CD8-positive, alpha-beta T cell (primary cell): ENCODE measurements at regions of chr12 and their contacts with region 1.

Region 1: GRCh38 chr12:66776974-66777373 is 98.1 kb upstream of the GRIP1 start:
- DNase-seq: peak; percentile 1 to 79 (median 40)
- ATAC-seq: peak; percentile 94
- H3K4me3 ChIP-seq: no peak overlapping the region
- H3K4me3 Mint-ChIP-seq: peak overlapping the region; percentile 75
- H3K27ac ChIP-seq: peak overlapping the region; percentile 17 to 56
- H3K27ac Mint-ChIP-seq: peak overlapping the region; percentile 96
- H3K4me1 ChIP-seq: peaks cover 36% of the 10 kb centered on the region
- H3K4me1 Mint-ChIP-seq: peaks cover 51% of the 10 kb centered on the region
- H3K27me3 ChIP-seq: no peaks in the 10 kb centered on the region
- H3K27me3 Mint-ChIP-seq: no peaks in the 10 kb centered on the region
- CTCF ChIP-seq: no peak

Region 2: DNA sequence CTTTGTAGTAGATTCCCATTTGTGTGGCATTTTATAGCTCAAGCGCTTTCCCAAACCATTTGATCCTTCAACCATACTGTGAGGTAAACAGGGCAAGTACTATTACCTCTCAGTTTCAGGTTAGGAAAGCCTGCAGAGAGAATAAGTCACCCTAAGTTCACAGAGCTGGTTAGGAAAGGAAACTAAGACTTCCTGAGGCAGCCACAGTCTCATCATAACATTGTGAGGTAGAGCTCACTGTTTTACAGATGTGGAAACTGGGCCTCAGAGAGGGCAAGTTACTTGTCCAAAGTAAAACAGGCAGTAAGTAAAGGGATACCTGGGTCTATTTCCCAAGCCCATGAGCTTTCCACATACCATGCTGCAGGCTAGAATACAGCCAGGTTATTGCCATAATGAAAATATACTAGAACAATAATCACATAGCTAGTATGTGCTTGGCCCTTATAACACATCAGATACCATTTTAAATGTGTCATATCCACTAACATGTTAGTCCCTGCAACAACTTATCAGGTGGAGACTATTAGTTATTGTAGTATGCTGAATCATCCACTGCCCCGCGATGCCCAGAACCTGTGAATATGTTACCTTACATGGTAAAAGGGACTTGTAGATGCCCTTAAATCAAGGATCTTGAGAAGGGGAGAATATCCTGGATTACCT is 52.8 kb after region 1 on chr12:
- CTCF ChIA-PET with region 1: no interaction called
- POLR2A ChIA-PET with region 1: no interaction called
- intact Hi-C with region 1: loop called in 1 of 2 experiments (anchors 5 kb)
- DNase-seq: peak in 3 of 9 experiments; percentile 19 to 54 (median 29)
- ATAC-seq: peak; percentile 61
- H3K4me3 ChIP-seq: no peak overlapping the region
- H3K4me3 Mint-ChIP-seq: peak overlapping the region; percentile 65
- H3K27ac ChIP-seq: peak overlapping the region in 1 of 2 experiments; percentile 64
- H3K27ac Mint-ChIP-seq: peak overlapping the region; percentile 81
- H3K4me1 ChIP-seq: peaks cover 43% of the 10 kb centered on the region
- H3K4me1 Mint-ChIP-seq: peaks cover 51% of the 10 kb centered on the region
- H3K27me3 ChIP-seq: no peaks in the 10 kb centered on the region
- H3K27me3 Mint-ChIP-seq: no peaks in the 10 kb centered on the region
- CTCF ChIP-seq: no peak